ENCODE measurements at regions of chr11 and their contacts with region 1.

Region 1: GRCh38 chr11:113314389-113315301 is at the start of gene TTC12:
- DNase-seq: peak; percentile 52
- H3K4me3 ChIP-seq: peak within 1 kb of the TSS; percentile 83
- H3K27me3 ChIP-seq: no peaks in the 10 kb centered on the region
- CTCF ChIP-seq: no peak
- polyA plus RNA-seq, gene TTC12: 11.2 and 14.0 TPM in 2 replicates

Region 2: DNA sequence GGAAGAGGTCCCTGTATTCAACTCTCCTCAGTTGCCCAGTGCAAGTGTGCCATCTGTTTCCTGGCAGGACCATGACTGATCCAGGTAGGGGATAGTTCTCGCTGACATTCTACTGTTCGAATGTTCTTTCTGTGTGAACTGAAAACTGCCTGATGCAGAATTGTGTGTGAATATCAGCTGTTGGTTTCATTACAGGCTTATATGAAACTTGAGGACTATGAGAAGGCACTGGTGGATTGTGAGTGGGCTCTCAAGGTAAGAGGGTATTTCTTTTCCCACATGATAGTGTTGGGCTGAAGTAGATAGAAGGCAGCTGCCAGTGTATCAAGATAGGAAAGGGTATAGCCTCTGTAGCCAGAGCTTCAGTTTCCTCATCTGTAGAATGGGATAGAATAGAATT is 15.1 kb after region 1 on chr11:
- CTCF ChIA-PET with region 1: no interaction called
- POLR2A ChIA-PET with region 1: no interaction called
- DNase-seq: no peak
- H3K4me3 ChIP-seq: no peak overlapping the region
- H3K27me3 ChIP-seq: no peaks in the 10 kb centered on the region
- CTCF ChIP-seq: no peak

Region 3: GRCh38 chr11:113806406-113806805 is 491.8 kb after region 1 on chr11:
- CTCF ChIA-PET with region 1: interaction called, 3 read pairs
- POLR2A ChIA-PET with region 1: interaction called, 14 read pairs
- DNase-seq: no peak
- H3K4me3 ChIP-seq: no peak overlapping the region
- H3K27me3 ChIP-seq: no peaks in the 10 kb centered on the region
- CTCF ChIP-seq: peak; percentile 42

Measured in BJ (cell line).